ENCODE measurements at regions of chr2 and their contacts with region 1.

Region 1: GRCh38 chr2:70132244-70133126 is 45.2 kb downstream of the PCBP1 start:
- DNase-seq: peak; percentile 77
- ATAC-seq: peak; percentile 74
- H3K4me3 ChIP-seq: peak overlapping the region; percentile 35 to 62 (median 53)
- H3K4me3 Mint-ChIP-seq: peak overlapping the region; percentile 87
- H3K27ac ChIP-seq: peak overlapping the region; percentile 80 to 87
- H3K27ac Mint-ChIP-seq: peak overlapping the region; percentile 96
- H3K4me1 ChIP-seq: peaks cover 52 to 61% of the 10 kb centered on the region in 2 donors
- H3K4me1 Mint-ChIP-seq: peaks cover 59% of the 10 kb centered on the region
- H3K27me3 ChIP-seq: no peaks in the 10 kb centered on the region
- H3K27me3 Mint-ChIP-seq: no peaks in the 10 kb centered on the region
- CTCF ChIP-seq: no peak

Region 2: DNA sequence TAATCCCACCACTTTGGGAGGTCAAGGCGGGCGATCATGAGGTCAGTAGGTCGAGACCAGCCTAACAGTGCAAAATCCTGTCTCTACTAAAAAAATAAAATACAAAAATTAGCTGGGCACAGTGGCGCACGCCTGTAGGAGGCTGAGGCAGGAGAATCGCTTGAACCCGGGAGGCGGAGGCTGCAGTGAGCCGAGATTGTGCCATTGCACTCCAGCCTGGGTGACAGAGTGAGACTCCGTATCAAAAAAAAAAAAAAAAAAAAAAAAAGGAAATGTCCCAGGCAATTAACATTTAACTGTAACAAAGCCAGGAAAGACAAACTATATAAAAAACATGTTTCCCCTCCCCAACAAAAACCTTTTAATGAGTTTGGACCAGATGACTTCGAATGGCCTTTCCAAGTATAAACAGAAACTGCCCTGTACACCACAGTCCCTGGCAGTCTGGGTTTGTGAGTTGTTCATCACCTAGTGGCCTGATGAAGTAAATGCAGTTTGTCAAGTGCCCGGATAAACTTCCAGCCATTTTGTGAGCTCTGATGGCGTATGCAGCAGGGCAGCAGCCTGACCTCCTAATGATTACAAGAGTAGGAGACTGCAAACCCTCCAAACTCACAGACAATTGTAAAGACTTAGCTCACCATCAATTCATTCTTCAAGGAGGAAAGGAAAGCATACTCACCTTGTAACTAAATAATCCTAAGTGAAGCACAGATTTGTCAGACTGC is 61.8 kb before region 1 on chr2:
- CTCF ChIA-PET with region 1: interaction called, 4 read pairs
- POLR2A ChIA-PET with region 1: interaction called, 20 read pairs
- intact Hi-C with region 1: no loop called
- DNase-seq: peak; percentile 86
- ATAC-seq: peak; percentile 96
- H3K4me3 ChIP-seq: no peak overlapping the region
- H3K4me3 Mint-ChIP-seq: peak overlapping the region; percentile 63
- H3K27ac ChIP-seq: peak overlapping the region; percentile 57 to 79
- H3K27ac Mint-ChIP-seq: peak overlapping the region; percentile 88
- H3K4me1 ChIP-seq: peaks cover 32 to 33% of the 10 kb centered on the region in 2 donors
- H3K4me1 Mint-ChIP-seq: peaks cover 30% of the 10 kb centered on the region
- H3K27me3 ChIP-seq: no peaks in the 10 kb centered on the region
- H3K27me3 Mint-ChIP-seq: no peaks in the 10 kb centered on the region
- CTCF ChIP-seq: peak; percentile 79

Region 3: GRCh38 chr2:70094978-70095719 is 37.3 kb before region 1 on chr2:
- CTCF ChIA-PET with region 1: interaction called, 98 read pairs
- POLR2A ChIA-PET with region 1: interaction called, 170 read pairs
- intact Hi-C with region 1: no loop called
- DNase-seq: peak; percentile 90
- ATAC-seq: peak; percentile 94
- H3K4me3 ChIP-seq: peak overlapping the region; percentile 29 to 68 (median 57)
- H3K4me3 Mint-ChIP-seq: peak overlapping the region; percentile 86
- H3K27ac ChIP-seq: peak overlapping the region; percentile 83 to 87
- H3K27ac Mint-ChIP-seq: peak overlapping the region; percentile 98
- H3K4me1 ChIP-seq: peaks cover 43 to 59% of the 10 kb centered on the region in 2 donors
- H3K4me1 Mint-ChIP-seq: peaks cover 46% of the 10 kb centered on the region
- H3K27me3 ChIP-seq: no peaks in the 10 kb centered on the region
- H3K27me3 Mint-ChIP-seq: no peaks in the 10 kb centered on the region
- CTCF ChIP-seq: no peak

Region 4: GRCh38 chr2:70115646-70116442 is 16.6 kb before region 1 on chr2:
- CTCF ChIA-PET with region 1: interaction called, 12 read pairs
- POLR2A ChIA-PET with region 1: interaction called, 107 read pairs
- intact Hi-C with region 1: no loop called
- DNase-seq: peak; percentile 57
- ATAC-seq: peak; percentile 66
- H3K4me3 ChIP-seq: peak overlapping the region in 2 of 5 experiments; percentile 8 to 16
- H3K4me3 Mint-ChIP-seq: peak overlapping the region; percentile 65
- H3K27ac ChIP-seq: peak overlapping the region in 1 of 2 donors; percentile 46
- H3K27ac Mint-ChIP-seq: peak overlapping the region; percentile 89
- H3K4me1 ChIP-seq: peaks cover 23 to 44% of the 10 kb centered on the region in 2 donors
- H3K4me1 Mint-ChIP-seq: peaks cover 38% of the 10 kb centered on the region
- H3K27me3 ChIP-seq: no peaks in the 10 kb centered on the region
- H3K27me3 Mint-ChIP-seq: no peaks in the 10 kb centered on the region
- CTCF ChIP-seq: no peak

Measured in B cell (primary cell).